Left cardiac atrium (tissue), 4 donors: ENCODE measurements at regions of chr10 and their contacts with region 1.

Region 1: DNA sequence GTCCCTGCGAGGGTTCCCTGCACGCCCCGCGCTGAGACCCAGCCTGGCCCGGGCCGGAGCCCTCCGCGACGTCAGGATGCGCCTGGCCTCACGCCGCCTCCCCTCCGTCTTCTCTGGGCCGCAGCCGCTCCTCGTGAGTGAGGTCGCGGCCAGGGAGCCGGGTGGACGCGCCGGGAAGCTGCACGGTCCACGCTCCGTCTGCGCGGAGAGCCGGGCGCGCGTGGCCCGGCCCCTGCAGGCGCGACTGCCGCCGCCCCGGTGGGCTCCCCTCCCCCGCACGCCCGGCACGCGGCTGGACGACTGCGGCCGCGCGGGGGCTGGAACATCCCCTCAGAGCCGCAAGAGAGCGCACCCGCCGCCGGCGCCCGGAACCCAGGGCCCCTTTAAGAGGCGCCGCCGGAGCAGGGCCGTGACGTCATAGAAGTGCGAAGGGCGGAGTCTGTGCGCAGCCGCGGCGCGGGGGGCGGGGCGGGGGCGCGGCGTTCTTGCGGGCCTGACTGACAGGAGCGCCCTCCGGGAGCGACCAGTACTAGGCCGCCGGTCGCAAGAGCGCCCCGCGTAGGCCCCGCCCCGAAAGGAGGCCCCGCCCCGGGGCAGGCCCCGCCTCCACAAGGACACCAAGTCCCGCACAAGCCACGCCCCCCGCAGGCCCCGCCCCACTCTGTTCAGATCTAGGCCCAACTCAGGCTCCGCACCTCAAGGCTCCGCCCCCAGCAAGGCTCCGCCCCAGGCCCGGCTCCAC is 445 bp upstream of the INPP5A start:
- DNase-seq: peak; percentile 100
- ATAC-seq: peak; percentile 94 to 96

Region 2: DNA sequence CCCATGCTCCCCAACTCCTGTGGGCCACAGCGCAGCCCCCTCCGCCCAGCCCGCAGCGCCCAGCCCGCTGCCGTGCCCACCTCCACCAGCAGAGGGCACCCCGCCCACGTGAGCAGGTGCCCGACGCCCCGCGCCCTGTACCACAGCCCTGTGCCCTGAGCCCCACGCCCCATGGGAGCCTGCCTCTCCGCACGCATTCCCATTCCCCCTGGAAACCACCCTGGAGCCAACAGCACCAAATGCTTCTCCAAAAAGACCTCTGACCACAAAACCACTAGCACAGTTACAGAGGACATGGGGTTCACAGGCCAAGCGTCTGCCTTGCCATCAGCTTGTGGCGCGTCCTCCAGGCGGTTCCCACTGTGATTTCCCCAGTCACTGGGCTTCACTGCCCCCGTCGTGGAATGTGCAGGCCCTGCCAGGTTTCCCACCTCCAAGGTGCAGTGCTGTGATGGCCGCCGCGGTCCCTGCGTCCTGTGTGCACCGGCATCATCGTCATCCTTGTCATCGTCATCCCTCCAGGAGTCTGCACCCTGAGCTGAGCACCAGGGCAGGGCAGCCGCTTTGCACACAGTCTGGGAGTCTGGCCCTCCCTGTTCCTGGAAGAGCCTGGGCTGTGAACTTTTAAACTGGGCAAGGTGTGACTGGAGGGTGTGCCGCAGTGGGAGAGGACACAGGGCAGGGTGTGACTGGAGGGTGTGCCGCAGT is 78.4 kb before region 1 on chr10:
- intact Hi-C with region 1: loop called in 1 of 2 experiments (anchors 10 kb)
- DNase-seq: peak; percentile 59
- ATAC-seq: peak; percentile 65 to 74

Region 3: DNA sequence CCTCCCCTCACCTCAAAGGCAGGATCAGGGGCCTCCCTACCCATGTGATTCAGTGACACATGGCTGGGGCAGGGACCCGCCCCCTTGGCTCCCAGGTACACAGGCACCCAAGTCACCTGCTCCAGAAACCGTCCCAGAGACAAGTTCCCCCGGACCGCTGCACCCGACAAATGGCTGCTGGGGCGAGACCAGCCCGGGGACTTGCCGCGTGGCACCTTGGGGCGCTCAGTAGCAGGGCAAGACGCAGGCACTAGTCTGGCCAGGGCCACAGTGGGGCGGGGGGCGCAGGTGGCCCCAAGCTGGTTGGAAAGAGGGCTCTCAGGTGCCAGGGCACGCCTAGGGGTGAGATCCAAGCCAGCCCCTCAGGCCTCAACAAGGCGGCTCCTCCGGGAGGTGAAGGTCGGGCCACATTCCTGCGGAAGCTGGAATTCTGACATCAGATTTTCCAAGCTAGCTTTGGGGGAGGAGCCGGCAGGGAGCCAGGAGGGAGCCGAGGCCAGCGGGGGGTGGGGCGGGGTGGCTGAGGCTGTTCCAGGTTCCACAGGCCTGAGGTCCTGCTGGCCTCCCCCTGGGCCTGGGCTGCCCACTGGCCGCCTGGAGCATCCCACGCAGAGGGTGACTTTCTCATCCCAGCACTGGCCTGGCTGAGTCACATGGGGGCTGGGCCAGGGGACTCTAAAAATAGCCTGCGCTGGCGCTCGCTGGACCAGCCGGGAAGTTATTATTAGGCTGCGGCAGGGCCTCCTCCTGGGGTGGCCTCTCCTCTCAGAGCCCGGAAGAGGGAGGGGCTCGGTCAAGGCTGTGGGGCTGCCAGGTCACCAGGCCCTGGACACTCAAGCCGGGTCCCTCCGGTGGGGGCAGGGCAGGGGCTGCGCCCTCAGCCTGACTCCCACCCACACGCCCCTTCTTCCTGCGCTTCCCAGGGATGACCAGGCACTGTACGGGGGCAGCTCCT is 20.1 kb before region 1 on chr10:
- intact Hi-C with region 1: loop called in 1 of 2 experiments (anchors 2 kb)
- DNase-seq: peak; percentile 95
- ATAC-seq: peak; percentile 90 to 91

Region 4: GRCh38 chr10:132571650-132572535 is 34.8 kb after region 1 on chr10:
- intact Hi-C with region 1: loop called in 1 of 2 experiments (anchors 5 kb)
- DNase-seq: no peak
- ATAC-seq: peak; percentile 39 to 93

Region 5: DNA sequence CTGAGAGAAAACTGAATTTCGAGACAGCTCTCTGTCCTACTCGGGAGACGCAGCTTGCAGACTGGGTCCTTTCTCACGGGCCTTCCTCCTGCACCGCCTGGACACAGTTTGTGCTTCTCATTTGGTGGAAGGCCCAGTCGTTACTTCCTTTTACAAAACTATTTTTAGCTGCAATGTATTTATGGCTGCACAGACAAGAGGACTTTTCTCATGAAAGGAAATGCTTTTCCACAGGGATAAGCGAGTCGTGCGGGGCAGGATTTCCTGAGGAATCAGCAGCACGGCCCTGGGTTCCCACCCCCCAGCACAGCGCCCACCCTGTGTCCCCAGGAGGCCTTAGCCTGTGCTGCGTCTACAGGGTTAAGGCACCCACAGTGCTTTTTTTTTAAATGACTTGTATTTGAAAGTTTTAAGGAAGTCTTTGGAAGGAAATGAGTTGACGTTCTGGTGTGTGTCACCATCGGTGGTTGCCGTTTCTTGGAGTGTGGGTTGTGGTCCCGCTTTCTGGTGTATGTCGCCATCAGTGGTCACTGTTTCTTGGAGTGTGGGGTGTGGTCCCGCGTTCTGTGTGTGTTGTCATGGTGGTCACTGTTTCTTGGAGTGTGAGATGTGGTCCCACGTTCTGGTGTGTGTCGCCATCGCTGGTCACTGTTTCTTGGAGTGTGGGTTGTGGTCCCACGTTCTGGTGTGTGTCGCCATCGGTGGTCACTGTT is 51.3 kb after region 1 on chr10:
- intact Hi-C with region 1: loop called in 1 of 2 experiments (anchors 5 kb)
- DNase-seq: peak; percentile 59
- ATAC-seq: peak; percentile 36 to 45

Region 6: GRCh38 chr10:132654702-132655661 is 117.8 kb after region 1 on chr10:
- intact Hi-C with region 1: no loop called
- DNase-seq: peak; percentile 52
- ATAC-seq: peak in 1 of 2 donors; percentile 23